Posterior vena cava (tissue), 2 donors: ENCODE measurements at regions of chr2 and their contacts with region 1.

Region 1: GRCh38 chr2:195021711-195022507 is 635.1 kb upstream of the SLC39A10 start:
- DNase-seq: no peak

Region 2: GRCh38 chr2:193428336-193428818 is 1593.5 kb before region 1 on chr2:
- intact Hi-C with region 1: no loop called
- DNase-seq: no peak

Region 3: GRCh38 chr2:195009202-195009601 is 12.7 kb before region 1 on chr2:
- intact Hi-C with region 1: loop called in 1 of 2 experiments (anchors 1 kb)
- DNase-seq: no peak